Caco-2 (cell line): ENCODE measurements at regions of chr7 and their contacts with region 1.

Region 1: DNA sequence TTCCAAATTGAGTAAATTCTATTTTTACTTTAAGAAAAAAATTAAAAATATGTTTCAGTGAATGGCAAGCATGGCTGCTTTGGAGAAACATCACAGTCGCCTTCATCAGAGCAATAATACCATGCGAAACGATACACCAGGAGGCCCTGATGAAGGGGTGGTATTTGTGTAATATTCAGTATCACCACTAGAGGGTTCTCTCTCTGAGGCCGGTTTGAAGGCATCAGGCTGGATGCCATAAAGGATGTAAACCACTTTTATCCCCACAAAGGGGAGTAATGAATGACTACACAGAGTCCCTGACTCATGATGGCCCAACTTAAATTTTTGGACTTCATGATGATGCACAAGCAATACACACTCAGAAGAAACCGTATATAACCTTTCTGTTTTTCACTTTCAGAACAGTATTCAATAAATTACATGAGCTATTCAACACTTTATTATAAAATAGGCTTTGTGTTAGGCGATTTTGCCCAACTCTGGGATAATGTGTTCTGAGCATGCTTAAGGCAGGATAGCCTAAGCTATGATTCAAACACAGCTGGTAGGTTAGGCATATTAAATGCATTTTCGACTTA is 95.5 kb downstream of the PPP1R17 start:
- DNase-seq: peak in 1 of 2 experiments; percentile 67
- H3K4me3 ChIP-seq: no peak overlapping the region
- H3K4me3 Mint-ChIP-seq: no peak overlapping the region
- H3K27ac Mint-ChIP-seq: no peak overlapping the region
- H3K4me1 ChIP-seq: no peaks in the 10 kb centered on the region
- H3K4me1 Mint-ChIP-seq: no peaks in the 10 kb centered on the region
- H3K27me3 ChIP-seq: no peaks in the 10 kb centered on the region; the same call in 1 of the 2 replicates
- H3K27me3 Mint-ChIP-seq: peaks cover 2% of the 10 kb centered on the region
- CTCF ChIP-seq: peak; percentile 73 to 77

Region 2: GRCh38 chr7:31724696-31725095 is 57.8 kb before region 1 on chr7:
- CTCF ChIA-PET with region 1: no interaction called
- POLR2A ChIA-PET with region 1: no interaction called
- intact Hi-C with region 1: no loop called
- DNase-seq: no peak
- H3K4me3 ChIP-seq: no peak overlapping the region
- H3K4me3 Mint-ChIP-seq: no peak overlapping the region
- H3K27ac Mint-ChIP-seq: no peak overlapping the region
- H3K4me1 ChIP-seq: no peaks in the 10 kb centered on the region
- H3K4me1 Mint-ChIP-seq: no peaks in the 10 kb centered on the region
- H3K27me3 ChIP-seq: no peaks in the 10 kb centered on the region; the same call in 1 of the 2 replicates
- H3K27me3 Mint-ChIP-seq: peaks cover 3% of the 10 kb centered on the region
- CTCF ChIP-seq: no peak

Region 3: GRCh38 chr7:32037650-32038198 is 255.2 kb after region 1 on chr7:
- CTCF ChIA-PET with region 1: no interaction called
- POLR2A ChIA-PET with region 1: no interaction called
- intact Hi-C with region 1: loop called (anchors 1 kb)
- DNase-seq: no peak
- H3K4me3 ChIP-seq: no peak overlapping the region
- H3K4me3 Mint-ChIP-seq: no peak overlapping the region
- H3K27ac Mint-ChIP-seq: no peak overlapping the region
- H3K4me1 ChIP-seq: peaks cover 6% of the 10 kb centered on the region
- H3K4me1 Mint-ChIP-seq: no peaks in the 10 kb centered on the region
- H3K27me3 ChIP-seq: no peaks in the 10 kb centered on the region; the same call in 1 of the 2 replicates
- H3K27me3 Mint-ChIP-seq: peaks cover 5% of the 10 kb centered on the region
- CTCF ChIP-seq: no peak

Region 4: DNA sequence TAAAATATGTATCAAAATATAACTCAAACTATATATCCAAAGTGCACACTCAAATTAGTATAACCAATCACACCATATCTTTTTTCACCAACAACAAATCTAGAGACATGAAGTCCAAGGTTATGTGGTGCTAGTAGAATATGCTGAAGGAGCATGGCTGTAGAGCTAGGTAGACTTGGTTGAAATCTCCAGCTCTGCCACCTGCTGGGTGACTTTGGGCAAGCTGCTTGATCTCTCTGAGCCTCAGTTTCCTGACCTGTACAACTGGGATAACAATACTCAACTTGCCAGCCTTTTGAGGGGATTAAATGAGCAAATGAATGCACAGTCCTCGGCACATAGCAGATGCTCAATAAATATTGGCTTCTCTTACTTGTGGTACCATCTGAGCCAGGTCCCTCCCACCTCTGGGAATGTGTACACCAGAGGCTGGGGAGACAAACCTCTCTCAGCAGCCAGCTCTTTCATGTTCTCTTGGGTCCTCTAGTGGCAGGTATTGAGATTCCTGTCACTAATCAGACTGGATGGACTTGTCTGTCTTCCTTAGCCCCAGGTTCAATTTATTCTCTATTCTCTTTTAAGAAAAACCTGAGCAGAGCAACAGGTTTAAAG is 382.0 kb after region 1 on chr7:
- CTCF ChIA-PET with region 1: no interaction called
- POLR2A ChIA-PET with region 1: no interaction called
- intact Hi-C with region 1: loop called (anchors 1 kb)
- DNase-seq: peak; percentile 51 to 56
- H3K4me3 ChIP-seq: no peak overlapping the region
- H3K4me3 Mint-ChIP-seq: no peak overlapping the region
- H3K27ac Mint-ChIP-seq: no peak overlapping the region
- H3K4me1 ChIP-seq: no peaks in the 10 kb centered on the region; the same call in 1 of the 2 replicates
- H3K4me1 Mint-ChIP-seq: no peaks in the 10 kb centered on the region
- H3K27me3 ChIP-seq: no peaks in the 10 kb centered on the region
- H3K27me3 Mint-ChIP-seq: no peaks in the 10 kb centered on the region
- CTCF ChIP-seq: peak; percentile 50 to 56

Region 5: GRCh38 chr7:32204361-32205018 is 422.0 kb after region 1 on chr7:
- CTCF ChIA-PET with region 1: no interaction called
- POLR2A ChIA-PET with region 1: no interaction called
- intact Hi-C with region 1: loop called (anchors 1 kb)
- DNase-seq: peak; percentile 62 to 67
- H3K4me3 ChIP-seq: no peak overlapping the region
- H3K4me3 Mint-ChIP-seq: no peak overlapping the region
- H3K27ac Mint-ChIP-seq: no peak overlapping the region
- H3K4me1 ChIP-seq: no peaks in the 10 kb centered on the region
- H3K4me1 Mint-ChIP-seq: no peaks in the 10 kb centered on the region
- H3K27me3 ChIP-seq: no peaks in the 10 kb centered on the region
- H3K27me3 Mint-ChIP-seq: peaks cover 29% of the 10 kb centered on the region
- CTCF ChIP-seq: peak; percentile 77 to 84